ENCODE measurements at regions of chr10 and their contacts with region 1.

Region 1: GRCh38 chr10:97445722-97446639 is at the starts of genes EXOSC1 and ZDHHC16:
- DNase-seq: peak; percentile 96
- ATAC-seq: peak; percentile 91
- H3K4me3 Mint-ChIP-seq: peak within 1 kb of the TSS; percentile 86
- H3K27ac Mint-ChIP-seq: peak within 1 kb of the TSS; percentile 90
- H3K4me1 Mint-ChIP-seq: peaks cover 55% of the 10 kb centered on the region
- H3K27me3 Mint-ChIP-seq: no peaks in the 10 kb centered on the region
- total RNA-seq, gene EXOSC1: 52.3 to 54.2 TPM
- total RNA-seq, gene ZDHHC16: 34.6 to 42.8 TPM

Region 2: DNA sequence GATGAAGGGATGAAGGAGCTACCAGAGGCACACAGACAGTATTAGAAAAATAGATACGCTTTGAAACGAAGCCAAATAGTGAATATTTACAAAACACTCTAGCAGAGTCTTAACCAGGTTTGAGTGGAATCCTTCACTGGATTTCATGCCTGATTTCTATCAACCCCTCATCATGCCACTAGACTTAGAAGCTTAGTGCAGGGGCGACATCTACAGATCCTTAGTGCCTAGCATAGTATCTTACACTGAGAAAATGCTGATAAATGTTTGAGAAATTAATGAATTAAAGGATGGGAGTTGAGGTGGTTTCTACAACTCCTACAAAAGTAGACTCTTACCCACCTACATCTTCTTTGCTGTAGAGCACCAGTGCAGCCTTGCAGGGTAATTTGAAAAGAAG is 1457.3 kb before region 1 on chr10:
- CTCF ChIA-PET with region 1: no interaction called
- POLR2A ChIA-PET with region 1: no interaction called
- intact Hi-C with region 1: no loop called
- DNase-seq: no peak
- ATAC-seq: no peak
- H3K4me3 Mint-ChIP-seq: no peak overlapping the region
- H3K27ac Mint-ChIP-seq: no peak overlapping the region
- H3K4me1 Mint-ChIP-seq: no peaks in the 10 kb centered on the region
- H3K27me3 Mint-ChIP-seq: no peaks in the 10 kb centered on the region

Region 3: DNA sequence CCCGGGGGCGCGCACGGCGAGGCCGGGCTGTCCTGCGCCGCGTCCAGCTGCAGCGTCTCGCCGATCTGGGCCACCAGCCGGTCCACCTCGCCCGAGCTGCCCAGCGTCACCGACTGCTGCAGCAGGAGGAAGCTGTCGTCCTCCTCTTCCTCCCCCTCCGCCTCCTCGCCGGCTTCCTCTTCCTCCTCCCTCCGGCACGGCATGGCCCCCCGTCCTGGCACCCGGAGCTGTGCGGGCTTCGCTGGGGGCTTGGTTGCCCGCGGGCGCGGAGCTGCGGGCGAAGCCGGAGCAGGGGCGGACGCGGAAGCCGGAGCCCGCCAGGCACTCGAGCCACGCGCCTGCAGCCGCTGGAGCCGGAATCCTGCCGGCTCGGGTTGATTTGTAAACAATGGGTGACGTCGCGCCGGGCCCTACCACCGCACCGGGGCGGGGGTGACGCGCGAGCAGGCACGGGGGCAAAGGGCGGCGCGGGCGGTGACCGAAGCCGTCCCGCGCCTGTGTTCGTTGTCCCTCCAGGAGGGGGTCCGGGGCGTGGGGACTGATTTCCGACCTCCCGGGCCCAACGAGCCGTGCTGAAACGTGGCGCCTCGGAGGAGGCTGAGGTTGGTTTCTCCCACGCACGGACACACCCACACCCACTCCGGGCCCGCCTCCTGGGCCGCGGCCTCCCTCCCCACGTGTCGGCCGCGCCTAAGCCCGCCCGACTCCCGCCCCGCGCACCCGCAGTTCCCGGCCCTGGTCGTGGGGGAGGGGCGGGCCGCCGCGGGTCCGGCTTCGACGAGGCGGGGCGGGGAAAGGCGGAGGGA is 111.4 kb before region 1 on chr10 and contains the start of gene FRAT2:
- CTCF ChIA-PET with region 1: no interaction called
- POLR2A ChIA-PET with region 1: no interaction called
- intact Hi-C with region 1: loop called in 1 of 2 experiments (anchors 1 kb)
- DNase-seq: peak; percentile 91
- ATAC-seq: peak; percentile 85
- H3K4me3 Mint-ChIP-seq: peak within 1 kb of the TSS; percentile 83
- H3K27ac Mint-ChIP-seq: peak within 1 kb of the TSS; percentile 86
- H3K4me1 Mint-ChIP-seq: peaks cover 40% of the 10 kb centered on the region
- H3K27me3 Mint-ChIP-seq: no peaks in the 10 kb centered on the region
- total RNA-seq, gene FRAT2: 3.0 to 4.3 TPM

Region 4: GRCh38 chr10:97407211-97407951 is 38.6 kb before region 1 on chr10:
- CTCF ChIA-PET with region 1: interaction called, 61 read pairs
- POLR2A ChIA-PET with region 1: interaction called, 19 read pairs
- intact Hi-C with region 1: loop called (anchors 1 kb)
- DNase-seq: peak; percentile 81
- ATAC-seq: peak; percentile 97
- H3K4me3 Mint-ChIP-seq: peak overlapping the region; percentile 47
- H3K27ac Mint-ChIP-seq: peak overlapping the region; percentile 56
- H3K4me1 Mint-ChIP-seq: peaks cover 11% of the 10 kb centered on the region
- H3K27me3 Mint-ChIP-seq: no peaks in the 10 kb centered on the region

Region 5: GRCh38 chr10:97425964-97426775 is 19.8 kb before region 1 on chr10 and contains the start of gene PGAM1:
- CTCF ChIA-PET with region 1: interaction called, 9 read pairs
- POLR2A ChIA-PET with region 1: interaction called, 12 read pairs
- intact Hi-C with region 1: loop called (anchors 1 kb)
- DNase-seq: peak; percentile 97
- ATAC-seq: peak; percentile 71
- H3K4me3 Mint-ChIP-seq: peak within 1 kb of the TSS; percentile 96
- H3K27ac Mint-ChIP-seq: peak within 1 kb of the TSS; percentile 98
- H3K4me1 Mint-ChIP-seq: peaks cover 52% of the 10 kb centered on the region
- H3K27me3 Mint-ChIP-seq: no peaks in the 10 kb centered on the region
- total RNA-seq, gene PGAM1: 1,151 to 1,499 TPM

Region 6: DNA sequence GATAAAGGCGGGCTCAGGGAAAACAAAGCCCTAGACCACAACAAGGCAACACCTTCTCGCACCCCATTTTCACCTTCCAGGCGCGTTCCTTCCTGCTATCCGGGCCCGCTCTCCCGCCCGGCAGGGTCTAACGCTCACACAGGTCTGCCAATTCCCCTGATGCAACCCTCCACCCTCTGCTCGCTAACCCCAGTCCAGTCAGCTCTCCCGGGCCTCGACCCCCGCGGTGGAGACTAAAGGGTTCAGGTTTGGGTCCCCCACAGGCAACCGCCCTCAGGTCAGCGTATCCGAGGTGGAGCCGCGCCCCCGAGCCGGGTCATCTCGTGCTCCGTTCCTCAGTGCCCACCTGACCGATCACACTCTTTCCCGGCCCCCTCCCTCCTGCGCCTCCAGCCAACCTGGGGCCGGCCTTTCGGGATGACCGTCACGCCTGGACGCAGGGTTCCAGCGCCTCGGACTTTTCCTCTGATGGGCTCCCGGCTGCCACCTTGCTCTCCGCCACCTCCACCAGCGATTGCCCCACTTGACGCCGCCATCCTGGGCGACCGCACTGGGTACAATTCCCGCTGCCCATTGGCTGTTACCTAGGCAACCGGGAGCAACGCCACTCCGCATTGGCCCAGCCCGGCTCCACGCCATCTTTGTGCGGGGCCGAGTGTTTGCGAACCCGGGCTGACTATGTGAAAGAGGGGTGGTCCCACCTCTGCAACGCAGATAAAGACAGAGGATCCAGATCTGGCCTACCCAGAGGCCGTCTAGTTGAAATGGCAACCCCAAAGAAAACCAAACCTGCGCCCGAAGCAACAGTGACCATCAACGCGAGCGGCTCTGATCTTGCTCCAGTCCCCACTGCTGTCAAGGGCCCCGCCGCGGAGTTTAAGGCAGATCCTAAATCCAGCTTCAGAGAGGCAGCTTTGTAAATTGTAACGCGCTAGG is 187.2 kb after region 1 on chr10 and contains the start of gene MORN4:
- CTCF ChIA-PET with region 1: no interaction called
- POLR2A ChIA-PET with region 1: no interaction called
- intact Hi-C with region 1: loop called in 1 of 2 experiments (anchors 1 kb)
- DNase-seq: peak; percentile 94
- ATAC-seq: peak; percentile 99
- H3K4me3 Mint-ChIP-seq: peak within 1 kb of the TSS; percentile 85
- H3K27ac Mint-ChIP-seq: peak within 1 kb of the TSS; percentile 85
- H3K4me1 Mint-ChIP-seq: peaks cover 16% of the 10 kb centered on the region
- H3K27me3 Mint-ChIP-seq: no peaks in the 10 kb centered on the region
- total RNA-seq, gene MORN4: 3.9 to 5.3 TPM

Measured in activated CD4-positive, alpha-beta T cell treated with anti-CD3 and anti-CD28 coated beads for 36 hours (primary cell).